ENCODE measurements at regions of chr1 and their contacts with region 1.

Region 1: DNA sequence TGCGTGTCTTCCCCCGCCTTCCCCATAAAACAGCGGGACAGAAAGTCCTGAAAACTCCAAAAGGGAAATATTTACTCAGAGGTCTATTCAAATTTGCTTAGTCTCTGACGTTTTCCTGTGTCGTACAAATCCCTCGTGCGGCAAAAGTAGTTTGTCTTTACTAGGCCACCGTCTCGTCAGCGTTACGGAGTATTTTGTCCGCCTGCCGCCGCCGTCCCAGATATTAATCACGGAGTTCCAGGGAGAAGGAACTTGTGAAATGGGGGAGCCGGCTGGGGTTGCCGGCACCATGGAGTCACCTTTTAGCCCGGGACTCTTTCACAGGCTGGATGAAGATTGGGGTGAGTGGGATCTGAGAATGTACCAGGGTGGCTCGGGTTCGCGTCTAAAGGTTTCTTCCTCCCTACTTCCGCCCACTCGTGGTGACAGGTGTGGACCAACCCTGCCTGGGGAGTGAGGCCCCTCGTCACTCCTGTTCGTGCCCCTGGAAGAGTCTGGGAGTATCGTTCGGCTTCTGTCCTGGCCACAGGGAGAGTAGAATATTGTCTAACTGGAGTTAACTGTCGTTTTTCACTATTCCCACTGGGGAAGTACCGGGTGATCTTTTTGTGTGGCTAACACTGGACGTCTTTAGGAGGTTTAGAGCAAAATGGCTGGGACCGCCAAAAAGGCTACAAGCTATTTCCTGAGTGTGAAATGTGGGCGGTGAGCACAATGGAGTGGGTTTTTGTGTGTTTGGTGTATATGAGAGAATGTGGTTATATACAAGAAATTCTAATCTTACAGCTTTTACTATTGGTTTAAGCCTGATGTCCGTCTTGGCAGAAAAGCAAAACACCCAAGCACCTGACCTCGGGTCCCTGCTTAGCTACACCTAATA is at the start of gene ATF6:
- DNase-seq: peak; percentile 89
- ATAC-seq: peak; percentile 68
- H3K4me3 Mint-ChIP-seq: peak within 1 kb of the TSS; percentile 96
- H3K27ac Mint-ChIP-seq: peak within 1 kb of the TSS; percentile 99
- H3K4me1 Mint-ChIP-seq: peaks cover 49% of the 10 kb centered on the region
- H3K27me3 Mint-ChIP-seq: no peaks in the 10 kb centered on the region
- total RNA-seq, gene ATF6: 23.7 to 31.9 TPM

Region 2: DNA sequence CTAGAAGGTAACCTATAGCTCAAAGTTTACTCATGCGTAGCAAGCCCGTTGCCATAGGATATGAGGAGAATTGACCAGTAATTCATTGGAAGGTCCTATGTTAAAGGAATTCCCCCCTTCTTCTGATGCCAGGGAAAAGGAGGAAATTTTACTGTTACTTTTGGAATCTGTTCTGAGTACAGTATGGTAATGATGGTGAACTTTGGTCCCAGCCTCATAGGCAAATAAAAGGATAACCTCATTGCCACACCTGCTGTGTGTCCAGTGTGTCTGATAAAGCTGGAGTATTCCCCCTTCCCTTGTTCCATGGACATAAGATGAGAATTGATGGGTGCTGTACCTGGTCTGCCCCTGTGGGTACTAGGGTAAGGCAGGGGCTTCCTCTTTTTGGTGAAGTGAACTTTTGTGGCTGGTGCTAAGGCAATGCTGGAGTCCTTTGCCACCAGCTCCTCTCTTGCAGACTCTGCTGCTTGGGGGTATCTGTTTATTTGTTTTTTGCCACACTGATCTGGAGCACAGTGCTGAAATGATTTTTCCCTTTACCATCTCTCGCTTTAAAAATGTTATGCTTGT is 478.8 kb before region 1 on chr1:
- CTCF ChIA-PET with region 1: no interaction called
- POLR2A ChIA-PET with region 1: no interaction called
- intact Hi-C with region 1: no loop called
- DNase-seq: no peak
- ATAC-seq: no peak
- H3K4me3 Mint-ChIP-seq: no peak overlapping the region
- H3K27ac Mint-ChIP-seq: no peak overlapping the region
- H3K4me1 Mint-ChIP-seq: no peaks in the 10 kb centered on the region
- H3K27me3 Mint-ChIP-seq: no peaks in the 10 kb centered on the region

Region 3: GRCh38 chr1:161359291-161359690 is 407.1 kb before region 1 on chr1:
- CTCF ChIA-PET with region 1: no interaction called
- POLR2A ChIA-PET with region 1: no interaction called
- intact Hi-C with region 1: no loop called
- DNase-seq: no peak
- ATAC-seq: no peak
- H3K4me3 Mint-ChIP-seq: no peak overlapping the region
- H3K27ac Mint-ChIP-seq: no peak overlapping the region
- H3K4me1 Mint-ChIP-seq: peaks cover 13% of the 10 kb centered on the region
- H3K27me3 Mint-ChIP-seq: no peaks in the 10 kb centered on the region

Region 4: GRCh38 chr1:161399257-161399998 is 366.9 kb before region 1 on chr1:
- CTCF ChIA-PET with region 1: no interaction called
- POLR2A ChIA-PET with region 1: no interaction called
- intact Hi-C with region 1: loop called in 1 of 2 experiments (anchors 5 kb)
- DNase-seq: peak; percentile 92
- ATAC-seq: peak; percentile 83
- H3K4me3 Mint-ChIP-seq: peak overlapping the region; percentile 89
- H3K27ac Mint-ChIP-seq: peak overlapping the region; percentile 100
- H3K4me1 Mint-ChIP-seq: peaks cover 34% of the 10 kb centered on the region
- H3K27me3 Mint-ChIP-seq: peaks cover 9% of the 10 kb centered on the region

Region 5: GRCh38 chr1:161749509-161750407 is 16.6 kb before region 1 on chr1 and contains the start of gene DUSP12:
- CTCF ChIA-PET with region 1: interaction called, 28 read pairs
- POLR2A ChIA-PET with region 1: interaction called, 6 read pairs
- intact Hi-C with region 1: loop called (anchors 1 kb)
- DNase-seq: peak; percentile 94
- ATAC-seq: peak; percentile 97
- H3K4me3 Mint-ChIP-seq: peak within 1 kb of the TSS; percentile 99
- H3K27ac Mint-ChIP-seq: peak within 1 kb of the TSS; percentile 99
- H3K4me1 Mint-ChIP-seq: peaks cover 43% of the 10 kb centered on the region
- H3K27me3 Mint-ChIP-seq: peaks cover 8% of the 10 kb centered on the region
- total RNA-seq, gene DUSP12: 28.0 to 28.1 TPM

Region 6: DNA sequence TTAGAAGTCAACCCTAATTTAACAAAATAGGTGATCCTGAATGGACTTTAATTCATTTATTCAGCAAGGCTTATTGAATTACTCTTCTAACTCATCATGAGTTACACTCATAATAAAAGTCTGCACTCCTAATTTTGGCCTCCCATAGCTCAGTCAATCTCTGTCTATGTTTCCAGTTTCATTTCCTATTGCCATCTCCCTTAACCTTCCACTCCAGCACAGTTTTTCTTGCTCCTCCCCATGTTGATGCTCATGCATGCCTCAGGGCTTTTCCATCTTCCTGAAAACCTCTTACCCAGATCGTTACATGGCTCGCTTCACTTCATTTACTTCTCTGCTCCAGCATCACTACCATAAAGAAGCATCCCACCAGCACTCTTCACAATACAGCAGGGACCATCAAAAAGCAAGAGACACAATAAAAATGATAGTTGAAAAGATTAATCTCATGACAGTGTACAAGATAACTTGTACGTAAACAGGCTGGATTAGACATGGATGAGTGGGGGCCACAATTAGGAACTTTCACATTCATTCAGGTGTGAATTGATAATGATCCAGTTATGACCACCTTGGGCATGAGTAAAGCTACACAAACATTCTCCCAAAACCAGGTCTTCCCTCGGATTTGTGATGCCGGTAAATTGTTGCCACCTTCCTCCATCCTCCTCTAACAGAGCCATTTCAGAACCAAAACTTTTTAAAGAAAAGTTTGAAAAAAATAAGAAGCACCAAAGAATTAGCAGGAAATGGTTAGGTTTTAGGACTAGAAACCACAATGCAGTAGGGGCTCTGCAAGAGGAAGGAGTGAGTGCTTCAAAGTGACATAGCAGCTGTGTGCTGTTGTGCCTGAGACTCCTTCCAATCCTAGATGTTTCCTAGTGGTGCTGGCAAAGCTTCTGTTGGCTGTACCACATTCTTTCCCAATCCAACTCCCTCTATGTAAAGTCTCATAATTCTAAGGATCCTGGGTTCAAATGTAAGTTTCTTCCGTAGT is 167.5 kb after region 1 on chr1:
- CTCF ChIA-PET with region 1: no interaction called
- POLR2A ChIA-PET with region 1: no interaction called
- intact Hi-C with region 1: no loop called
- DNase-seq: no peak
- ATAC-seq: peak; percentile 81
- H3K4me3 Mint-ChIP-seq: peak overlapping the region; percentile 2
- H3K27ac Mint-ChIP-seq: peak overlapping the region; percentile 84
- H3K4me1 Mint-ChIP-seq: peaks cover 52% of the 10 kb centered on the region
- H3K27me3 Mint-ChIP-seq: no peaks in the 10 kb centered on the region

Region 7: DNA sequence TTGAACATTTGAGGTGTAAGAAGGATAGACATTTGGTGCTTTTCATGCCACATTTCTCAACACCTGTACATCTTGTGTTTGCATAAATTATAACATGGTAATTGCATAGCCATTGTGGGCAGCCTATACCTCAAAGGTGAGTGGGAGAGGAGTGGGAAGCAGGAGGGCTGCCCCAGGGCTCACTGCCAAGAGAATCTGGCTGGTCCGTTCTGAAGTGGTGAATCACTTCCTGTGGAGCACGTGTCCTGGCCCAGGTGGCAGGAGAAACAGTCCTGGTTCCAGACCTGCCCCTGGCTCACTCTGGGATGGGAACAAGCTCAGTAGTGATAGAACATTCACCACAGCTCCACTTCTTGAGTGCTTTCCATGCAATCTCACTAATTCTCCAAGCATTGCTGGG is 268.9 kb after region 1 on chr1:
- CTCF ChIA-PET with region 1: interaction called, 21 read pairs
- POLR2A ChIA-PET with region 1: no interaction called
- intact Hi-C with region 1: loop called (anchors 1 to 10 kb)
- DNase-seq: peak; percentile 45
- ATAC-seq: peak; percentile 21
- H3K4me3 Mint-ChIP-seq: no peak overlapping the region
- H3K27ac Mint-ChIP-seq: no peak overlapping the region
- H3K4me1 Mint-ChIP-seq: peaks cover 7% of the 10 kb centered on the region
- H3K27me3 Mint-ChIP-seq: peaks cover 4% of the 10 kb centered on the region

Region 8: GRCh38 chr1:162497723-162498500 is 731.6 kb after region 1 on chr1 and contains the start of gene UHMK1:
- CTCF ChIA-PET with region 1: no interaction called
- POLR2A ChIA-PET with region 1: no interaction called
- intact Hi-C with region 1: loop called in 1 of 2 experiments (anchors 5 kb)
- DNase-seq: peak; percentile 95
- ATAC-seq: peak; percentile 98
- H3K4me3 Mint-ChIP-seq: peak within 1 kb of the TSS; percentile 93
- H3K27ac Mint-ChIP-seq: peak within 1 kb of the TSS; percentile 95
- H3K4me1 Mint-ChIP-seq: peaks cover 38% of the 10 kb centered on the region
- H3K27me3 Mint-ChIP-seq: no peaks in the 10 kb centered on the region
- total RNA-seq, gene UHMK1: 35.1 to 48.1 TPM